Activated naive CD4-positive, alpha-beta T cell treated with anti-CD3 and anti-CD28 coated beads for 36 hours (primary cell): ENCODE measurements at regions of chr1 and their contacts with region 1.

Region 1: DNA sequence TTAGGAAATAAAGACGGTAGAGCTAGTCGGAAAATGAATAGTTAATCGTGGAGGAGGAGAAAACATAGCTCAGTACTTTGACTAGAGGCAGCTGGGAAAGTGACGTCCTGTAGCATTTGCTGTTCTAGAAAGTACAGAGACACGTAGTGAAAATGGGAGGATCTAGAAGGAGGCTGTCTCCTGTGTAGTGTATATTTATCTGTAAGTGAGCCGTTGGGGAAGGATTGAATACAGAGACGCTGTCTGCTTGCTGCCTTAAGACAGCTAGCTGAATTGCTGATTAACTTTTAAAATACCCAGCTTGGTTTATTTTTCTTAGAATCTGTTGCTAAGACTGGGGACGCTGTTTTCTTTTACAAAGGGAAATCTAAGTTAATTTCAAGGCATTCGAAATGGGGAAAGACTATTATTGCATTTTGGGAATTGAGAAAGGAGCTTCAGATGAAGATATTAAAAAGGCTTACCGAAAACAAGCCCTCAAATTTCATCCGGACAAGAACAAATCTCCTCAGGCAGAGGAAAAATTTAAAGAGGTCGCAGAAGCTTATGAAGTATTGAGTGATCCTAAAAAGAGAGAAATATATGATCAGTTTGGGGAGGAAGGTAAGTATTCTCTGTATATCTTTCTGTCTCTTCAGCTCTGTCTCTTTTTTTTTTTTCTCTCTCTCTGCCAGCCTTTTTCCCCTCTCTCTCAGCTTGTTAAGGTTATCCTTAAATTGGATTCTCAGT is at the start of gene DNAJB4:
- DNase-seq: peak; percentile 82
- H3K4me3 Mint-ChIP-seq: peak within 1 kb of the TSS; percentile 88
- H3K27ac Mint-ChIP-seq: peak within 1 kb of the TSS; percentile 100
- H3K4me1 Mint-ChIP-seq: peaks cover 39% of the 10 kb centered on the region
- H3K27me3 Mint-ChIP-seq: peaks cover 3% of the 10 kb centered on the region
- total RNA-seq, gene DNAJB4: 9.7 to 10.4 TPM

Region 2: GRCh38 chr1:77759071-77760028 is 245.5 kb before region 1 on chr1 and contains the start of gene USP33:
- CTCF ChIA-PET with region 1: no interaction called
- intact Hi-C with region 1: loop called (anchors 1 kb)
- DNase-seq: peak; percentile 93
- H3K4me3 Mint-ChIP-seq: peak within 1 kb of the TSS; percentile 90
- H3K27ac Mint-ChIP-seq: peak within 1 kb of the TSS; percentile 93
- H3K4me1 Mint-ChIP-seq: peaks cover 46% of the 10 kb centered on the region
- H3K27me3 Mint-ChIP-seq: no peaks in the 10 kb centered on the region
- total RNA-seq, gene USP33: 32.6 to 35.6 TPM

Region 3: GRCh38 chr1:77926561-77927357 is 78.1 kb before region 1 on chr1:
- CTCF ChIA-PET with region 1: no interaction called
- intact Hi-C with region 1: loop called (anchors 1 kb)
- DNase-seq: no peak
- H3K4me3 Mint-ChIP-seq: peak overlapping the region; percentile 70
- H3K27ac Mint-ChIP-seq: peak overlapping the region; percentile 69
- H3K4me1 Mint-ChIP-seq: peaks cover 10% of the 10 kb centered on the region
- H3K27me3 Mint-ChIP-seq: no peaks in the 10 kb centered on the region

Region 4: DNA sequence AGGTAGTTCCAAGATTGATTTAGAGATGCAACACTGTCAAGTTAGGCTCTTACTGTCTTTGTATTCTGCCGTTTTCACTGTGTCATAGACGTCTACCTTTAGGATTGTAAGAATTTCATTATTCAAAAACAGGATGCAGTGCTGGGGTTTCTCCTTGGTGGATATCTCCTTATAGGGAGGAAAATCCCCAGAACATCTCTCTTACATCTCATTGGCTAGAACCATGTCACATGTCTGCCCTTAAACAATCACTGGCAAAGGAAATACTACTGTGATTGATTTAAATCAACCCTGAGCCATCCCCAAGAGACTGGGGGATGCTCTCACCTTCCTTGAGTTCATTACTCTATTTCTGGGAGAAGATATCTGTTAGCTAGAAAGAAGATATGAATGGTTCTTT is 15.1 kb before region 1 on chr1:
- CTCF ChIA-PET with region 1: no interaction called
- intact Hi-C with region 1: no loop called
- DNase-seq: no peak
- H3K4me3 Mint-ChIP-seq: no peak overlapping the region
- H3K27ac Mint-ChIP-seq: no peak overlapping the region
- H3K4me1 Mint-ChIP-seq: peaks cover 39% of the 10 kb centered on the region
- H3K27me3 Mint-ChIP-seq: no peaks in the 10 kb centered on the region

Region 5: DNA sequence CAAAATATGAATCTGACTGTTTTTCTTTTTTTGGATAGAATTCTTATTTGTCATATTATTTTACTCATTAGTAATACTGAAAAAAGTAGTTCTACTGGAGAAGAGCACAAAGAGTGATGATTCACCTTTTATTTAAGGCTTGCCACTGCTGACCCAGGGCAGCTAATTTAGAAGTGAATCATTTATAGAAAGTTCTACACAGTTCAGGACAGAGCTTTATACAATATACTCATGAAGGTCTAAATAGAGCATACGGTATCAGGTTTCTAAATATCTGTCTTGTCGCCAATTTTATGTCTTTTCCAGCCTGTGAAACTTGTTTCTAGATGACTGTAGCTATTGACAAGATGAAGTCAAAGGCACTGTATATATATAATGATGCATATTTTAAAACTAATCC is 65.9 kb after region 1 on chr1:
- CTCF ChIA-PET with region 1: no interaction called
- intact Hi-C with region 1: loop called (anchors 2 kb)
- DNase-seq: no peak
- H3K4me3 Mint-ChIP-seq: no peak overlapping the region
- H3K27ac Mint-ChIP-seq: no peak overlapping the region
- H3K4me1 Mint-ChIP-seq: no peaks in the 10 kb centered on the region
- H3K27me3 Mint-ChIP-seq: peaks cover 9% of the 10 kb centered on the region

Region 6: GRCh38 chr1:78114034-78114956 is 109.4 kb after region 1 on chr1:
- CTCF ChIA-PET with region 1: interaction called, 20 read pairs
- intact Hi-C with region 1: loop called (anchors 1 kb)
- DNase-seq: peak; percentile 79
- H3K4me3 Mint-ChIP-seq: no peak overlapping the region
- H3K27ac Mint-ChIP-seq: no peak overlapping the region
- H3K4me1 Mint-ChIP-seq: peaks cover 8% of the 10 kb centered on the region
- H3K27me3 Mint-ChIP-seq: no peaks in the 10 kb centered on the region

Region 7: GRCh38 chr1:78649628-78650027 is 644.7 kb after region 1 on chr1 and contains the start of gene IFI44:
- CTCF ChIA-PET with region 1: no interaction called
- intact Hi-C with region 1: loop called (anchors 2 kb)
- DNase-seq: peak; percentile 87
- H3K4me3 Mint-ChIP-seq: peak within 1 kb of the TSS; percentile 87
- H3K27ac Mint-ChIP-seq: peak within 1 kb of the TSS; percentile 74
- H3K4me1 Mint-ChIP-seq: peaks cover 50% of the 10 kb centered on the region
- H3K27me3 Mint-ChIP-seq: no peaks in the 10 kb centered on the region
- total RNA-seq, gene IFI44: 40.1 to 42.3 TPM